ENCODE measurements at regions of chr9 and their contacts with region 1.

Region 1: DNA sequence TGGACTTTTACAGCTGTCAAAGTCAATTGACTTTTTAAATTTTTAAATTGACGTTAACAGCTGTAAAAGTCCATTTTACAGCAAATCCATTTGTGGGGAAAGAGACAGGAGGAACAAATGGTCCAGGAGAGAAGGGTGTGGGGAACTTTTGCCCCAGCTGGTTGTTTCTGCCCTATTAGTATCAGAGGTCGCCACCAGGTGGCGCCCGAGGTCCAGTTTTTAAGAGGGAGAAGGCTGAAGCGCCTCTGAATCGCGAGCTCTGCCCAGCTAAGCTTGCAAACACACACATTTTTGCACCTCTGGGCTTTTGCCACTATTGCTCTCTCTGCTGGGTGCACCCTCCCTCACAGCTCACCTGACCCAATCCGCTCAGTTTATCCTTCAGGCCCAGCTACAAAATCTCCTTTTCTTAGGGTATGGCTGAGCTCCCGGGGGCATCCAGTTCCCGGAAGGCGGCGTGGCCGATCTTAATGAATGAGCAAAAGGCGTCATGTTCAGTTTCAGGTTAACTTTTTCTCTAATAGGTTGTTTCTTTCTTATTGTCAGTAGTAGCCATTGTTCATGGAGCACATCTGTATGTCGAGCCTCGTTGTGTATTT is 6.3 kb upstream of the TTLL11 start:
- DNase-seq: peak; percentile 90
- ATAC-seq: peak; percentile 87
- H3K4me3 Mint-ChIP-seq: peak overlapping the region; percentile 1
- H3K27ac Mint-ChIP-seq: no peak overlapping the region
- H3K4me1 Mint-ChIP-seq: peaks cover 9% of the 10 kb centered on the region
- H3K27me3 Mint-ChIP-seq: peaks cover 8% of the 10 kb centered on the region
- CTCF ChIP-seq: peak; percentile 84

Region 2: GRCh38 chr9:122080986-122081385 is 18.4 kb before region 1 on chr9:
- CTCF ChIA-PET with region 1: interaction called, 14 read pairs
- POLR2A ChIA-PET with region 1: no interaction called
- intact Hi-C with region 1: no loop called
- DNase-seq: no peak
- ATAC-seq: no peak
- H3K4me3 Mint-ChIP-seq: no peak overlapping the region
- H3K27ac Mint-ChIP-seq: no peak overlapping the region
- H3K4me1 Mint-ChIP-seq: peaks cover 3% of the 10 kb centered on the region
- H3K27me3 Mint-ChIP-seq: no peaks in the 10 kb centered on the region
- CTCF ChIP-seq: no peak

Region 3: GRCh38 chr9:122113574-122113973 is 14.2 kb after region 1 on chr9:
- CTCF ChIA-PET with region 1: interaction called, 304 read pairs
- POLR2A ChIA-PET with region 1: no interaction called
- intact Hi-C with region 1: no loop called
- DNase-seq: no peak
- ATAC-seq: no peak
- H3K4me3 Mint-ChIP-seq: no peak overlapping the region
- H3K27ac Mint-ChIP-seq: no peak overlapping the region
- H3K4me1 Mint-ChIP-seq: no peaks in the 10 kb centered on the region
- H3K27me3 Mint-ChIP-seq: no peaks in the 10 kb centered on the region
- CTCF ChIP-seq: no peak

Region 4: GRCh38 chr9:122144836-122145591 is 45.6 kb after region 1 on chr9:
- CTCF ChIA-PET with region 1: interaction called, 11 read pairs
- POLR2A ChIA-PET with region 1: no interaction called
- intact Hi-C with region 1: no loop called
- DNase-seq: no peak
- ATAC-seq: no peak
- H3K4me3 Mint-ChIP-seq: no peak overlapping the region
- H3K27ac Mint-ChIP-seq: no peak overlapping the region
- H3K4me1 Mint-ChIP-seq: no peaks in the 10 kb centered on the region
- H3K27me3 Mint-ChIP-seq: no peaks in the 10 kb centered on the region
- CTCF ChIP-seq: peak; percentile 16

Region 5: GRCh38 chr9:122264360-122265148 is 165.2 kb after region 1 on chr9 and contains the starts of genes MRRF and RBM18:
- CTCF ChIA-PET with region 1: interaction called, 12 read pairs
- POLR2A ChIA-PET with region 1: no interaction called
- intact Hi-C with region 1: no loop called
- DNase-seq: peak; percentile 92
- ATAC-seq: peak; percentile 81
- H3K4me3 Mint-ChIP-seq: peak within 1 kb of the TSS; percentile 84
- H3K27ac Mint-ChIP-seq: peak within 1 kb of the TSS; percentile 100
- H3K4me1 Mint-ChIP-seq: peaks cover 41% of the 10 kb centered on the region
- H3K27me3 Mint-ChIP-seq: no peaks in the 10 kb centered on the region
- CTCF ChIP-seq: no peak
- total RNA-seq, gene MRRF: 69.8 to 76.0 TPM
- total RNA-seq, gene RBM18: 24.3 to 28.6 TPM

Region 6: DNA sequence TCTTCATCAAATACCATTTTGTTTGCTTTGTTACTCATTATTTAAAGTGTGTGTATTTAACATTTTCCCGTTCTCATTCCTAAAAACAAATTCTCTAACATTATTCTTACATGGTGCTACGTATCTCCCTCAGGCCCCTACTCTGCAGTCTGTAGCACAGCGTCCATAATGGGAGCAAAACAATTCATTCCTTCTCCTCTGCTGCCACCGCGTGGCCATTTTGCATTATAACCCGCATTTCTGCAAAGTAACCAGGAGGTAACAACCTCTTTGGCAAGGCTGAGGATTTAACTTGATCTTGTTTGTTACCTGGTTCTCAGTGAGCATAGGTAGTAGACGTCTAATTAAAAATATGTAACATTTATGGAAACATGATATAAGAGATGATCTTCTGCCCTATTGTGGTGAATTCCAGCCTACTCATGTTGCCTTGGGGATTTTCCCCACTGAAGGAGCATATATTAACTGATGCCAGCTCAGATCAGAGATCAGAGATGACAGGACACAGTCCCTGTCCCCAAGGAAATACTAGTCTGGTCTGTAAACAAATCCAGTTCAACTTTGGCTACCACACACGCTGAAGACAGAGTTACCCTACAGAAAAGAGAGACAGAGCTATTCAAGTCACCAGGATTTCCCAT is 711.1 kb after region 1 on chr9:
- CTCF ChIA-PET with region 1: interaction called, 14 read pairs
- POLR2A ChIA-PET with region 1: no interaction called
- intact Hi-C with region 1: no loop called
- DNase-seq: peak; percentile 83
- ATAC-seq: peak; percentile 77
- H3K4me3 Mint-ChIP-seq: no peak overlapping the region
- H3K27ac Mint-ChIP-seq: no peak overlapping the region
- H3K4me1 Mint-ChIP-seq: peaks cover 31% of the 10 kb centered on the region
- H3K27me3 Mint-ChIP-seq: no peaks in the 10 kb centered on the region
- CTCF ChIP-seq: peak; percentile 89